Transverse colon (tissue), 4 donors: ENCODE measurements at regions of chr9 and their contacts with region 1.

Region 1: GRCh38 chr9:87662808-87663528 is 63.0 kb upstream of the CTSL start:
- DNase-seq: peak; percentile 86
- H3K4me3 ChIP-seq: no peak overlapping the region
- H3K27ac ChIP-seq: no peak overlapping the region
- H3K4me1 ChIP-seq: no peaks in the 10 kb centered on the region
- H3K27me3 ChIP-seq: no peaks in the 10 kb centered on the region
- CTCF ChIP-seq: peak; percentile 69 to 82 (median 74)
- EP300 ChIP-seq: no peak
- POLR2A ChIP-seq: no peak

Region 2: DNA sequence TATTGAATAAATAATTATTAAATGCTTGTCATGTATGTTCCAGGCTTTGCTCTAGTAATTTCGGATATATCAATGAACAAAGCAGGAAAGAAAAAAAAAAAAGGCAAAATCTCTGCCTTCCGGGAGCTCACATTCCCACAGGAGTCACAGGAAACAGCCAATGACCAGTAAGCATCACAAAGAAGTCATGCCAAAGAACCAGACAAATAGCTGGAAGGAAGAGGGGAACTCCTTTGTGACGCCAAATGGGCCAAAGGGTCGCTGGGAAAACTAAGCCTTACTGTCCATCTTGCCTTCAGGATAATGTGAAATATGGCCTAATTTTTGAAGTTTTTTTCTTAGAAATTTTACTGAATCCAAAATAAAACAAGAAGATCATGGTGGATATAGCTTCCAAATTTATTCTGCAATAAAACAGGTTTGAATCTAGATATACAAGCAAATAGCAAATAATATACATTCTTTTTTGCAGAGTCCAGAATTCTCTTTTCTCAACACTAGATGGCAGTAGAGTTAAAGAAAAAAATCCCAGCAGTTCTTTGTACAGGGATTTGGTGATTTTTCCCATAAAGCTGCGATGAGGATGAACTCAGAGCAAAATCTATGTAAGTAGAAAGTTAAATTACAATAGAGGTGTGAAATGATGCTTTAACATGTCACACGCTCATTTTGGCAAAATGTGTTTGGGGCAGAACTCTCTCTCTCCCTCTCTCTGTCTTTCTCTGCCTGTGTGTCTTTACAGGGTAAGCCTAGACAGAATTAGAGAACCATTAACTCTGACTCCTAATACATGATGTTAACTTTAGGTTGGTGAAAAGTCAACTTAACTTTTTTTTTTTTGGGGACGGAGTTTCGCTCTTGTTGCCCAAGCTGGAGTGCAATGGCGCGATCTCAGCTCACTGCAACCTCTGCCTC is 1248.7 kb before region 1 on chr9:
- in situ Hi-C with region 1: loop called in 2 of 4 experiments (anchors 25 kb)
- intact Hi-C with region 1: no loop called
- DNase-seq: no peak
- H3K4me3 ChIP-seq: no peak overlapping the region
- H3K27ac ChIP-seq: no peak overlapping the region
- H3K4me1 ChIP-seq: no peaks in the 10 kb centered on the region
- H3K27me3 ChIP-seq: peaks cover 4% of the 10 kb centered on the region
- CTCF ChIP-seq: peak; percentile 41 to 78 (median 71)
- EP300 ChIP-seq: no peak
- POLR2A ChIP-seq: no peak

Region 3: GRCh38 chr9:87336914-87337333 is 326.0 kb before region 1 on chr9:
- in situ Hi-C with region 1: loop called in 3 of 4 experiments (anchors 5 to 10 kb)
- intact Hi-C with region 1: loop called (anchors 5 kb)
- DNase-seq: no peak
- H3K4me3 ChIP-seq: peak overlapping the region; percentile 9 to 36 (median 17)
- H3K27ac ChIP-seq: no peak overlapping the region
- H3K4me1 ChIP-seq: peaks cover 0 to 12% (median 5%) of the 10 kb centered on the region in 4 donors
- H3K27me3 ChIP-seq: peaks cover 18% of the 10 kb centered on the region
- CTCF ChIP-seq: peak; percentile 66 to 81 (median 74)
- EP300 ChIP-seq: no peak
- POLR2A ChIP-seq: no peak

Region 4: DNA sequence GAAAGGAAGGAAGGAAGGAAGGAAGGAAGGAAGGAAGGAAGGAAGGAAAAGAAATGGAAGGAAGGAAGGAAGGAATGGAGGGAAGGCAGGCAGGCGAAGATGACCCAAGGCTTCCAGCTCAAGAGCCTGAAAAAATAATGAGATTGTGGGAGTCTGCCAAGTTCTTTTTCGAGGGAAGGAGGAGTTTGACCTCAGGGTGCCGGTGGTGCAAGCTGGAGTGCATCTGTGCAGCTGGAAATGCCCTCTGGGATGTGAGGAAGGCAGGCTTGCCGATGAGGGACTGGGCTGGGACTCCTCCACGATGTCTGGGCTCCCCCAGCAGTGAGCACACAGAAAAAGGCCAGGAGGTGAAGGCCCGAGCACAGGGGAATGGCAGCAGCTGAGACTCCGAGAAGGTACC is 320.2 kb before region 1 on chr9:
- in situ Hi-C with region 1: loop called in 3 of 4 experiments (anchors 5 to 10 kb)
- intact Hi-C with region 1: loop called (anchors 5 kb)
- DNase-seq: no peak
- H3K4me3 ChIP-seq: no peak overlapping the region
- H3K27ac ChIP-seq: no peak overlapping the region
- H3K4me1 ChIP-seq: peaks cover 0 to 3% (median 0%) of the 10 kb centered on the region in 4 donors
- H3K27me3 ChIP-seq: peaks cover 10% of the 10 kb centered on the region
- CTCF ChIP-seq: no peak
- EP300 ChIP-seq: no peak
- POLR2A ChIP-seq: no peak

Region 5: DNA sequence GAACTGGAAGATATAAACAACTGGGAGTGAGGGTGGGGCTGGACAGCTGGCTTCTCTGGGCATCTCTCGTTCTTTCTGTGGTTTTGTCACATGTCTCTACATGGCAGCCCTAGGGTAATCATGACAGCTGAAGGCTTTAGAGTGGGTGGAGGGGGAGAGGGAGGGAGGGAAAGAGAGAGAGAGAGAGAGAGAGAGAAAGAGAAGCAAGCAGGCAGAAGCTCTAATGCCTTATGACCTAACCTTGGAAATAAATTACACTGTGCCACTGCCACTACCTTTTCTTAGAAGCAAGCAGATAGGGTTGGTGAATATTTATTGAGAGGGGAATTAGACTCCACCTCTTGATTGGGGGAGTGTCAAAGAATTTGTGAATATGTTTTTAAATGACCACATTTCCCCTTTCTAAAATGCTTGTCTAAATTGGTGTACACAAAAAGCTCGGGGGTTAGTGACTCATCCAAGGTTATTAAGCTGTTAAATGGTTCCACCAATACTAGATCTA is 167.9 kb before region 1 on chr9:
- in situ Hi-C with region 1: no loop called
- intact Hi-C with region 1: loop called (anchors 2 kb)
- DNase-seq: peak; percentile 29
- H3K4me3 ChIP-seq: no peak overlapping the region
- H3K27ac ChIP-seq: no peak overlapping the region
- H3K4me1 ChIP-seq: peaks cover 0 to 14% (median 6%) of the 10 kb centered on the region in 4 donors
- H3K27me3 ChIP-seq: peaks cover 15% of the 10 kb centered on the region
- CTCF ChIP-seq: no peak
- EP300 ChIP-seq: no peak
- POLR2A ChIP-seq: no peak

Region 6: DNA sequence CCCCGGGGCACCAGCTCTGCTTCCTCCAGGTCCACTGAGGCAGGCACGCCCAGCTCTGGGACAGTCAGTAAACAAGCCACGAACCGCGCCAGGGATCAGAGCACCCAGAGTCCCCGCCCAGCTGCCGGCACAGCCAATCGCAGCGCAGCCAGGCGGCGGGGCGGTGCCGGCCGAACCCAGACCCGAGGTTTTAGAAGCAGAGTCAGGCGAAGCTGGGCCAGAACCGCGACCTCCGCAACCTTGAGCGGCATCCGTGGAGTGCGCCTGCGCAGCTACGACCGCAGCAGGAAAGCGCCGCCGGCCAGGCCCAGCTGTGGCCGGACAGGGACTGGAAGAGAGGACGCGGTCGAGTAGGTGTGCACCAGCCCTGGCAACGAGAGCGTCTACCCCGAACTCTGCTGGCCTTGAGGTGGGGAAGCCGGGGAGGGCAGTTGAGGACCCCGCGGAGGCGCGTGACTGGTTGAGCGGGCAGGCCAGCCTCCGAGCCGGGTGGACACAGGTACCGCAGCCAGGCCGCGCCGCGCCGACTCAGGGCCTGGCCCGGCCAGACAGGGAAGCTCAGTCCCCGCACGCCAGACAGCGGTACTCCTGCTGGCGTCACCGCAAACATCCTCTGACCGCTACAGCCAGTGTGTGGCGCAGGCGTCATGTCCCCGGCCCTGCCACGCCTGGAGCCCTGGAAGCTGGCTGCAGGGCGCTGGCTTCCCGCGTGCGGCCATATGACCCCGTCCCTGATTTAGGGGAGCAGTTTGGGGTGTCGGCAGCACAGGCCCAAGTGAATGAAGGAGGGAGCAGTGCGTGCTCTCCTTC is 63.1 kb after region 1 on chr9 and contains the start of gene CTSL:
- in situ Hi-C with region 1: no loop called
- intact Hi-C with region 1: no loop called
- DNase-seq: peak; percentile 89
- H3K4me3 ChIP-seq: peak within 1 kb of the TSS; percentile 55 to 75 (median 59)
- H3K27ac ChIP-seq: peak within 1 kb of the TSS; percentile 83 to 93 (median 90)
- H3K4me1 ChIP-seq: peaks cover 0 to 24% (median 11%) of the 10 kb centered on the region in 4 donors
- H3K27me3 ChIP-seq: no peaks in the 10 kb centered on the region
- CTCF ChIP-seq: peak in 4 of 5 experiments; percentile 15 to 50 (median 32)
- EP300 ChIP-seq: no peak
- POLR2A ChIP-seq: peak; percentile 82
- total RNA-seq, gene CTSL: 26.7 to 108 (median 66.6) TPM